Activated T-helper 1 cell treated with anti-CD3 and anti-CD28 coated beads, Interleukin-12 subunit alpha, Interleukin-12 subunit beta, Interleukin-2, Interleukin-4 antibody, amounts not matched to agents 30 ng/mL and 10 ng/mL and 1 ng/mL, durations not matched to agents 14 hours and 24 hours and 36 hours (primary cell): ENCODE measurements at regions of chr10 and their contacts with region 1.

Region 1: DNA sequence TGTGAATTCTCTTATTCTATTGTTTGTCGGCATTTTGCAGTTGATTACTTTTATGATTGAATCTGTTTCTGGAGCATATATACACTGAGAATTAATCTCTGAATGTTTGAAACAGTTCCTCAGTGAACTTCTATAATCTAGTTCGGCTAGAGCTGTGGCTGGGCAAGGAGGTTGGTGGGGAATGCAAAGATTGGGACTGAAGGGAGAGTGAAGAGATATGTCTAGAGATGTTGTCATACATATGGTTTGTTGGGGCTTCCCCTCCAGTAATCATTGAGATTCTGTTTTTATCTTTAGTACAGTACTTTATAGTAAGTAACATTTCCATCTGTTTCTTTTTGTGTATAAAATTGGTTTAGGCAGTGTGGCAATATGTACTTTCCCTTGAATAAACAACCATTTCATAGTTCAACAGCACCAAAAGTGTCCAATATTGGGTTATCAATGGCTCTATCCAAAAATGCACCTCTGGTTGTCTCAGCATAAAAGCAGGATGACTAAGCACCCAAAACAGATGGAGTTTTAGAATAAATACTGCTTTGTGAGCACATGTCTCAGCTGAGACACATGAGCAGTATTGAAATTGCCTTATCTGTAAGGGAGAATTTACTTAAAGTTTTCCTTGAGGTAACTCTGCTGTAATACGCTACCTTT is 36.7 kb downstream of the WAC start:
- DNase-seq: no peak
- H3K4me3 Mint-ChIP-seq: no peak overlapping the region
- H3K27ac Mint-ChIP-seq: peak overlapping the region; percentile 15
- H3K4me1 Mint-ChIP-seq: peaks cover 63% of the 10 kb centered on the region
- H3K27me3 Mint-ChIP-seq: no peaks in the 10 kb centered on the region

Region 2: DNA sequence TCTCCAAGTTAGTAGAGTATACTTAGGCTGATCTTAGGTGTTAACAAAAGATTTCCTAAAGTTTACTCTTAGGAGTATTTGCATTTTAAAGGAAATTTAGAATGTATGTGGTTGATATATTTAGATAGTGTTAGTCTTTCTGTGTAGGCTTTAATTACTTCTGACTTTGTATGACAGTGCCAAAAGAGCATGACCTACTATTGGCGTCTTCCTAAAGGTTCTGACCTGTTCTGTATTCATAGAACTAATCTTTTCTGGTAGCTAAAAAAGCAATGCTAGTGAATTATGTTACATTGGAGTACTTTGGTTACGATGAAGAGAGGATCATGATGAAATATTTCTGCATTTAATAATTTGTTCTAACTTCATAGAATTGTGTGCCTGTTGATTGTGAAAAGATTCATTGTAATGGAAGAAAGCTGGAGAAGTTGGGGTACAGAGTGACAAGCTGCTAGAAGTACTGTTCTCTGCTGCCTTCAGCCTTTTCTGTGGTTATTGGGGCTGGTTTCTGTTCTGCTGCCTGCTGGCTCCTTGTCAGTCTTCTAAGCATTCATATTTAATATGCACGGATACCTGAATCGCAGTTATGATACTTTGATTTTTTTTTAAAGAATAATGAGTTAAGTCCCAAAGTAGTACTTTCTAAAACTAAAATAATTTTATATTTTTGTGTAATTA is 23.5 kb before region 1 on chr10:
- intact Hi-C with region 1: loop called (anchors 2 kb)
- DNase-seq: no peak
- H3K4me3 Mint-ChIP-seq: peak overlapping the region; percentile 51
- H3K27ac Mint-ChIP-seq: peak overlapping the region; percentile 70
- H3K4me1 Mint-ChIP-seq: peaks cover 61% of the 10 kb centered on the region
- H3K27me3 Mint-ChIP-seq: no peaks in the 10 kb centered on the region

Region 3: GRCh38 chr10:28587970-28588290 is 18.3 kb after region 1 on chr10:
- intact Hi-C with region 1: loop called (anchors 2 kb)
- DNase-seq: no peak
- H3K4me3 Mint-ChIP-seq: no peak overlapping the region
- H3K27ac Mint-ChIP-seq: peak overlapping the region; percentile 11
- H3K4me1 Mint-ChIP-seq: peaks cover 48% of the 10 kb centered on the region
- H3K27me3 Mint-ChIP-seq: no peaks in the 10 kb centered on the region